A549 (cell line): ENCODE measurements at regions of chr5 and their contacts with region 1.

Region 1: GRCh38 chr5:133111299-133111698 is 59.5 kb downstream of the HSPA4 start:
- DNase-seq: peak; percentile 83 to 87
- ATAC-seq: peak; percentile 78 to 90
- H3K4me3 ChIP-seq: no peak overlapping the region
- H3K27ac ChIP-seq: peak overlapping the region; percentile 35 to 61; a peak in 4 of 6 replicates
- H3K4me1 ChIP-seq: peaks cover 13% of the 10 kb centered on the region; the same call in 2 of the 3 replicates
- CTCF ChIP-seq: peak; percentile 98
- EP300 ChIP-seq: no peak
- POLR2A ChIP-seq: no peak
- RAD21 ChIP-seq: peak; percentile 100

Region 2: GRCh38 chr5:133123297-133123696 is 12.0 kb after region 1 on chr5:
- CTCF ChIA-PET with region 1: interaction called, 37 read pairs
- POLR2A ChIA-PET with region 1: no interaction called
- DNase-seq: no peak
- ATAC-seq: no peak
- H3K4me3 ChIP-seq: no peak overlapping the region
- H3K27ac ChIP-seq: peak overlapping the region in 1 of 2 experiments; percentile 9; a peak in 1 of 6 replicates
- H3K4me1 ChIP-seq: peaks cover 11% of the 10 kb centered on the region; the same call in 1 of the 3 replicates
- CTCF ChIP-seq: no peak
- EP300 ChIP-seq: no peak
- POLR2A ChIP-seq: no peak
- RAD21 ChIP-seq: no peak

Region 3: DNA sequence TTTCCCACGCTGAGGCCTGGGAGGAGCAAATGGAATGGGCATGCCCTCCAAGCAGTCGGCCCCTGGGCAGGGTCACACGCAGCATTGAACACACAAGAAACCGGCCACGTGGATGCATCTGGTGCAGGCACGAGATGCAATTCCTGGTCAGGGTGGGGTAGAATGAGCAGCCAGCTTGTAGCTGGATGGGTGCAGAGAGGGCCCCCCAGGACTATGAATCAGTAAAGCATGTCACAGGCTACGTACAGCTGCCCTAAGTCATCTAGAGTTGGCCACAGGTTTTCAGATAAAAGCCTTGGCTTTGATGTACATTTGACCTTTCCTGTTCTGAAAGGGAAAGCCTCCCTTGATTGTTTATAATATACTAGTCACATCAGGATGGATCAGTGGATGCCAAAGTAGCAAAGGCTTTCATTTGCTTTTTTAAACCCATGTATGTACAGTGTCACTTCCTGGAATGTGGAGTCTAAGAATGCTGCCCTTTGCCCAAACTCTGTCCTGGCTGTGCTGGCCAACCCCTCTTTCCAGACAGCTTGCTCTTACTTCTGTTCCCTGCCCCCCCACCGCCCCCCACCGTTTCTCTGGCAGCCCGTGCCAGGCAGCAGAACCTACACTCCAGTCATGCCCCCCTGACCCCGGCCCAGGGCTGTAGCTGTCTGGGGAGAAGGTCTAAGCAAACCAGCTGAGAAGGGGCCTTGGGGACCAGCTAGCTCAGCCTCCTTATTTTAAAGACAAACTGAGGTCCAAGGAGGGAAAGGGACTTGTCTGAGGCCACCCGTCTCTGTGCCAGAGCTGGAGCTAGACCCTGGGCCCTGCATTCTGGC is 109.8 kb after region 1 on chr5:
- CTCF ChIA-PET with region 1: interaction called, 10 read pairs
- POLR2A ChIA-PET with region 1: no interaction called
- DNase-seq: peak in 1 of 2 experiments; percentile 32
- ATAC-seq: peak in 1 of 2 experiments; percentile 72; a peak in 3 of 6 replicates
- H3K4me3 ChIP-seq: no peak overlapping the region
- H3K27ac ChIP-seq: peak overlapping the region; percentile 66 to 75
- H3K4me1 ChIP-seq: peaks cover 33% of the 10 kb centered on the region
- CTCF ChIP-seq: no peak
- EP300 ChIP-seq: peak; percentile 19 to 35; a peak in 2 of 5 replicates
- POLR2A ChIP-seq: no peak
- RAD21 ChIP-seq: no peak

Region 4: DNA sequence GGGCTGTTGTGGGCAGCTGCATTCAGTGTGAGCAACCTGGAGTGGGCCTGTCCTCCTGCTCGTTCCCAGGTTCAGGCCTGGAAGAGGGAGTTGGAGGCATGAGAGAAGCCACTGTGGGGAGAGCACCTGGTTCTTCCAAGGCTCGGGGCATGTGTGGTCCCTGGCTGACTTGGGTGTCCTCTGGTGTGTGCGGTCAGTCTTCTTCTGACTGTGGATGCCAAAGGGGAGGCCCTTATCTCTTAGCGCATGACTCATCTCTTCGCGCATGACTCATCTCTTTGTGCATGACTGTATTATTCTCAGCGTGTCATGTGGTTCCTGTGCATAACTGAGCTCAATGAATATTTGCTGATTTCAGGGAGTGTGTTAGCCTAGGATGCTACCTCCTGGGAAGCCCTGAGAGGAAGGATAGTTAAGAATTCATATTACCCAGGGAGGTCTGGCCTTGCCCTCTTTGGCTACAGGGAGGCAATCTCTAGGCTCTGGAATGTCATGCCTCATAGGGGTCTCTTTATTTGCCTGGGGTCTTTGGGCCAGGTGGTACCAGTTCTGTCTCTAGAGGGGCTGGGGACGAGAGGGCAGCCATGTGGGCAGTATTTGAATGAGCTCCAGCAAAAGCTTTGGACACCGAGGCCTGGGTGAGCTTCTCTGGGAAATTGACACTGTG is 129.3 kb after region 1 on chr5:
- CTCF ChIA-PET with region 1: interaction called, 302 read pairs
- POLR2A ChIA-PET with region 1: interaction called, 6 read pairs
- DNase-seq: peak; percentile 95
- ATAC-seq: peak; percentile 86 to 91
- H3K4me3 ChIP-seq: no peak overlapping the region
- H3K27ac ChIP-seq: peak overlapping the region; percentile 89 to 94
- H3K4me1 ChIP-seq: peaks cover 60% of the 10 kb centered on the region
- CTCF ChIP-seq: no peak
- EP300 ChIP-seq: peak; percentile 52 to 63; a peak in 2 of 5 replicates
- POLR2A ChIP-seq: no peak
- RAD21 ChIP-seq: peak in 1 of 2 experiments; percentile 27; a peak in 1 of 5 replicates

Region 5: DNA sequence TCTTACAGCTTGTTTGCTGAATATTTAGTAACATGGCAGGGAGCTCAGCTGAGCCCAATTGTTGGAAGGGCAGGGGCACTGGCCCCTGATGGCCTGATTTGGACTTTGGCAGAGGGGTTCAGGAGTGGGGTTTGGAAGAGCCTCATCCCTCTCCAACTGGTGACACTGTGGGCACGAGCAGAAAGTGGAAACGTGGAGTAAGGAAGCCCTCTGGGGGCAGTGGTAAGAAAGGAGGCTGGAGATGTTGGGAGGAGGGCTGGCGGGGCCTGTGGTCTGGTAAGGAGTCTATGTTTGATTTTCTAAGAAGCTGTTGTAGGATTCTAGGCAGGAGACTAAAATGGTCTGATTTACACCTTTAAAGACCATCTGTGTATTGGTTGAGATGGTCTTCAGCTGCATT is 149.4 kb after region 1 on chr5:
- CTCF ChIA-PET with region 1: interaction called, 37 read pairs
- POLR2A ChIA-PET with region 1: no interaction called
- DNase-seq: no peak
- ATAC-seq: peak; percentile 58 to 76; a peak in 5 of 6 replicates
- H3K4me3 ChIP-seq: no peak overlapping the region
- H3K27ac ChIP-seq: peak overlapping the region in 1 of 2 experiments; percentile 18; a peak in 1 of 6 replicates
- H3K4me1 ChIP-seq: no peaks in the 10 kb centered on the region
- CTCF ChIP-seq: peak; percentile 31; the same call in 2 of the 3 replicates
- EP300 ChIP-seq: no peak
- POLR2A ChIP-seq: no peak
- RAD21 ChIP-seq: peak; percentile 62 to 72

Region 6: GRCh38 chr5:133287500-133287899 is 176.2 kb after region 1 on chr5:
- CTCF ChIA-PET with region 1: interaction called, 94 read pairs
- POLR2A ChIA-PET with region 1: no interaction called
- DNase-seq: peak; percentile 39 to 53
- ATAC-seq: peak; percentile 63 to 82; a peak in 5 of 6 replicates
- H3K4me3 ChIP-seq: no peak overlapping the region
- H3K27ac ChIP-seq: no peak overlapping the region
- H3K4me1 ChIP-seq: peaks cover 43% of the 10 kb centered on the region
- CTCF ChIP-seq: peak; percentile 58
- EP300 ChIP-seq: no peak
- POLR2A ChIP-seq: no peak
- RAD21 ChIP-seq: peak; percentile 71 to 75

Region 7: DNA sequence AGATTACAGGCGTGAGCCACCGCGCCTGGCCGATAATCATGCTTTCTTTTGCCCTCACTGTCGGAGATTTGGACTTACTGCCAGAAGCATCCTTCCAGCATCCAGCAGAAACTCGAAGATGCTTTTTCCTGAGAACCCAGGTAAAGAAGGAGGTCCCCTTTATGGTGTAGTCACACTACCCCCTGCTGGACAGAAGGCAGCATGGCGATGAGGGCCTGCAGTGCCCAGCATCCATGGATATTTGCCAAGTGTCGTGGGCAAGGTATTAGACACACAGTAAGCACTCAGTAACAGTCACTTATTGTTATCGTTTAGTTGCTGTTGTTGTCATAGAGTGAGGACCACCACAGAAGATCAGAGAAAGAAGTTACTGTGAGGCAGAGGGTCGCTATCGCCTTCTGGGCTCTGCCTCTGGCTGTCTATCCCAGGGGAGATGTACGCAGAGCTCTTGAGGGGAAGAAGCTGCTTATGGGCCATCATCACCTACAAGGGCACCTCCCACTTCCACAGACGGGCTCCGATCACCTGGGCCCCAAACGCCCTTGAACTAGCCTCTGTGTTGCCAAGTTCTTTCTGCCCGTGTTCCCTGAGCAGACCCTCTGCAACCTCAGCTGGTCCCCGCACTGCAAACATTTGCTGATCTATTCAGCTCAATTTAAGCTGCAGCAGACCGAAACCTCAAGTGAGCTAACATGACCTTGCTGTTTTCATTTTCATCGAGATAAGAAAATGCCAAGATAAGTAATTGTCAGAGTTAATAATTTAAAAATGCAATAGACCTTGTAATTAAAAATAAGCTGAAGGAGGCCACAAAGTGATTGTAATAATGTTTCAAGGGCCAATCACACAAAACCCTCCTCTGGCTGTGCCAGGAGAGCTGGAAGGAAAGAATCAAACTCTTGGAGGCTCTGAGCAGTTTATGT is 833.2 kb after region 1 on chr5:
- CTCF ChIA-PET with region 1: interaction called, 17 read pairs
- POLR2A ChIA-PET with region 1: no interaction called
- DNase-seq: peak; percentile 64 to 74
- ATAC-seq: peak; percentile 77 to 90; a peak in 4 of 6 replicates
- H3K4me3 ChIP-seq: no peak overlapping the region
- H3K27ac ChIP-seq: no peak overlapping the region
- H3K4me1 ChIP-seq: no peaks in the 10 kb centered on the region
- CTCF ChIP-seq: peak; percentile 58
- EP300 ChIP-seq: no peak
- POLR2A ChIP-seq: no peak
- RAD21 ChIP-seq: peak; percentile 81 to 91